Right cardiac atrium (tissue), 5 donors: ENCODE measurements at regions of chr10 and their contacts with region 1.

Region 1: GRCh38 chr10:75099952-75100763 is 11.3 kb upstream of the SAMD8 start:
- DNase-seq: peak; percentile 79 to 93 (median 91)
- ATAC-seq: peak; percentile 84 to 87
- H3K4me3 ChIP-seq: no peak overlapping the region
- H3K27ac ChIP-seq: no peak overlapping the region
- H3K4me1 ChIP-seq: no peaks in the 10 kb centered on the region
- H3K27me3 ChIP-seq: no peaks in the 10 kb centered on the region

Region 2: GRCh38 chr10:74244097-74244685 is 856.0 kb before region 1 on chr10:
- intact Hi-C with region 1: loop called in 2 of 4 experiments (anchors 5 kb)
- DNase-seq: no peak
- ATAC-seq: no peak
- H3K4me3 ChIP-seq: no peak overlapping the region
- H3K27ac ChIP-seq: no peak overlapping the region
- H3K4me1 ChIP-seq: no peaks in the 10 kb centered on the region
- H3K27me3 ChIP-seq: no peaks in the 10 kb centered on the region

Region 3: DNA sequence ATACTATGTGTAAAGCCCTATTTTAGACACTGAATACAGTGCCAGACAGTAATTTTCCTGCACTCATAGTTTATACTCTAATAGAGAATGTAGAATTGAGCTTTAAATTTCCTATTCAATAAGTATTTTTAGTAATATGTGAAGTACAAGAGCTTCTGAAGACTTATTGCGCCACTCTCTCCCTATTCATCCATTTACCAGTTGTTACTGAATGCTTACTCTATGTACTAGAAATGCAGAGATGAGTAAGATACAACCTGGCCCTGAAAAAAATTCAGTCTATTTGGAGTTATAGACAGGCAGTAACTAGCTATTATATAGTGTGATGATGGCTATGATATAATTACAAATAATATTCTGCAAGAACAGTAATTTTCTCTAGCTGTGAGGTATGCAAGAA is 850.3 kb before region 1 on chr10:
- intact Hi-C with region 1: loop called in 1 of 4 experiments (anchors 5 kb)
- DNase-seq: no peak
- ATAC-seq: no peak
- H3K4me3 ChIP-seq: no peak overlapping the region
- H3K27ac ChIP-seq: no peak overlapping the region
- H3K4me1 ChIP-seq: no peaks in the 10 kb centered on the region
- H3K27me3 ChIP-seq: no peaks in the 10 kb centered on the region

Region 4: DNA sequence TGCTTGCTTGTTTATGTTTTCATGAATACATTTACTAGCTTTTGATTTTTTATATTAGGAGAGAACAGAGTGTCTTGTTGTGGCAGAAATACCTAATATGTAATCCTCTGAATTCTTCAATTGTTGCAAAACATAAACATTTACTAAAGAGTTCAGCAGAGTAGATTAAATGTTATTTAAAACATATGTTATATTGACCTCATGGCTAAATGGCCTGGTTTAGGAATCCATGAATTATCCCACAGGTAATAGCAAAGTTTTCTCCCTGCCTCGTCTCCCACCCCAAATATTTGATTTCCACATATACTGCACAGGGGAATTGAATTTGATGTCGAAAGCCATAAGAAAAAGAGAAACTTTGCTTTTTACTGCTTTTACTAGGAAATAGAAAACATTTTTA is 837.3 kb before region 1 on chr10:
- intact Hi-C with region 1: loop called in 3 of 4 experiments (anchors 5 to 10 kb)
- DNase-seq: no peak
- ATAC-seq: no peak
- H3K4me3 ChIP-seq: no peak overlapping the region
- H3K27ac ChIP-seq: no peak overlapping the region
- H3K4me1 ChIP-seq: no peaks in the 10 kb centered on the region
- H3K27me3 ChIP-seq: no peaks in the 10 kb centered on the region

Region 5: DNA sequence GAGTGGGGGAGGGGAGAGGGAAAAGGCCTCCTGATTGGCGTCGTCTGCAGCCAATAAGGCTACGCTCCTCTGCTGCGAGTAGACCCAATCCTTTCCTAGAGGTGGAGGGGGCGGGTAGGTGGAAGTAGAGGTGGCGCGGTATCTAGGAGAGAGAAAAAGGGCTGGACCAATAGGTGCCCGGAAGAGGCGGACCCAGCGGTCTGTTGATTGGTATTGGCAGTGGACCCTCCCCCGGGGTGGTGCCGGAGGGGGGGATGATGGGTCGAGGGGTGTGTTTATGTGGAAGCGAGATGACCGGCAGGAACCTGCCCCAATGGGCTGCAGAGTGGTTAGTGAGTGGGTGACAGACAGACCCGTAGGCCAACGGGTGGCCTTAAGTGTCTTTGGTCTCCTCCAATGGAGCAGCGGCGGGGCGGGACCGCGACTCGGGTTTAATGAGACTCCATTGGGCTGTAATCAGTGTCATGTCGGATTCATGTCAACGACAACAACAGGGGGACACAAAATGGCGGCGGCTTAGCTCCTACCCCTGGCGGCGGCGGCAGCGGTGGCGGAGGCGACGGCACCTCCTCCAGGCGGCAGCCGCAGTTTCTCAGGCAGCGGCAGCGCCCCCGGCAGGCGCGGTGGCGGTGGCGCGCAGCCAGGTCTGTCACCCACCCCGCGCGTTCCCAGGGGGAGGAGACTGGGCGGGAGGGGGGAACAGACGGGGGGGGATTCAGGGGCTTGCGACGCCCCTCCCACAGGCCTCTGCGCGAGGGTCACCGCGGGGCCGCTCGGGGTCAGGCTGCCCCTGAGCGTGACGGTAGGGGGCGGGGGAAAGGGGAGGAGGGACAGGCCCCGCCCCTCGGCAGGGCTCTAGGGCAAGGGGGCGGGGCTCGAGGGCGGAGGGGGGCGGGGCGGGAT is 273.8 kb before region 1 on chr10 and contains the start of gene KAT6B:
- intact Hi-C with region 1: loop called in 1 of 4 experiments (anchors 10 kb)
- DNase-seq: peak; percentile 100
- ATAC-seq: peak; percentile 96
- H3K4me3 ChIP-seq: peak within 1 kb of the TSS; percentile 75
- H3K27ac ChIP-seq: peak within 1 kb of the TSS; percentile 100
- H3K4me1 ChIP-seq: peaks cover 5% of the 10 kb centered on the region
- H3K27me3 ChIP-seq: no peaks in the 10 kb centered on the region
- total RNA-seq, gene KAT6B: 44.1 to 53.0 (median 46.7) TPM

Region 6: DNA sequence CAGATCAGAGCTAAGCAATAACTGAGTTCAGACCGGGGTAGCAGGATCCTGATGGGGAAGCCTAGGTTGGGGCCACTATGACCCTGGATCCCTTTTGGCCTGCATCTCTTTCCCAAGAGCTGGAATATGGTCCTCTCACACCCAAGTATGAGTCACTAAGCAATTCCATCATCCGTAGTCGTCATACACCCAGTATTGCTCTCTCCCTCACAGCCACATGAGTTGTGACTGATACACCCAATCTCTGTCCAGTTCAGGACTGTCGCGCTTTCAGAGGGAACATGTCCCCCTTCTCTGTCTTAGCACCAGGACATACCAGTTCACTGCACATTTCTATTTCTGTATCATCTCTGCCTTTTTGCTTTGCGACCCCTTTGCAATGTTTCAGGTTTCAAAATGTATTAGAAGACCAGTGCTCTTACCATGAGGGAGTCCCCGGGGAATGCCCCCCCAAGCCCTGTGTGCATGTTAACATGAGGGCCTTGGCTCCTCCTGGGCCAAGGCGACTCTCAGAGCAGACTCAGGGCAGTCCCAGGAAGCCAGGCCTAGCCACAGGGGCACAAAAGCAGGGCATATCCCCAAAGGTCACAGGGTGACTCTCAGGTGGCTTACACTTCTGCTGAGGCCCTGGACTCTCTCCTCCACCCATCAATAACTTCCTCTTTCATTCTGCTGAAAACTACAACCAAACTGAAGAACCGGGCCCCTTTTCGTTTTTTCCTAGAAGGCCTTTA is 64.0 kb before region 1 on chr10:
- intact Hi-C with region 1: loop called in 1 of 4 experiments (anchors 10 kb)
- DNase-seq: no peak
- ATAC-seq: peak in 1 of 2 donors; percentile 33
- H3K4me3 ChIP-seq: no peak overlapping the region
- H3K27ac ChIP-seq: no peak overlapping the region
- H3K4me1 ChIP-seq: peaks cover 4% of the 10 kb centered on the region
- H3K27me3 ChIP-seq: no peaks in the 10 kb centered on the region